ENCODE measurements at regions of chr9 and their contacts with region 1.

Region 1: GRCh38 chr9:20622330-20623020 is at the start of gene MLLT3:
- DNase-seq: peak; percentile 92 to 99 (median 97)
- ATAC-seq: peak; percentile 76 to 83 (median 78)
- H3K4me3 ChIP-seq: peak within 1 kb of the TSS; percentile 91 to 95
- H3K4me3 Mint-ChIP-seq: peak within 1 kb of the TSS; percentile 96 to 99 (median 98)
- H3K27ac ChIP-seq: peak within 1 kb of the TSS; percentile 82
- H3K27ac Mint-ChIP-seq: peak within 1 kb of the TSS; percentile 97 to 99
- H3K4me1 ChIP-seq: peaks cover 19 to 34% of the 10 kb centered on the region in 2 experiments
- H3K4me1 Mint-ChIP-seq: peaks cover 43 to 48% (median 45%) of the 10 kb centered on the region in 3 donors
- H3K27me3 ChIP-seq: no peaks in the 10 kb centered on the region
- H3K27me3 Mint-ChIP-seq: no peaks in the 10 kb centered on the region
- total RNA-seq, gene MLLT3: 51.8 to 96.6 (median 58.9) TPM

Region 2: DNA sequence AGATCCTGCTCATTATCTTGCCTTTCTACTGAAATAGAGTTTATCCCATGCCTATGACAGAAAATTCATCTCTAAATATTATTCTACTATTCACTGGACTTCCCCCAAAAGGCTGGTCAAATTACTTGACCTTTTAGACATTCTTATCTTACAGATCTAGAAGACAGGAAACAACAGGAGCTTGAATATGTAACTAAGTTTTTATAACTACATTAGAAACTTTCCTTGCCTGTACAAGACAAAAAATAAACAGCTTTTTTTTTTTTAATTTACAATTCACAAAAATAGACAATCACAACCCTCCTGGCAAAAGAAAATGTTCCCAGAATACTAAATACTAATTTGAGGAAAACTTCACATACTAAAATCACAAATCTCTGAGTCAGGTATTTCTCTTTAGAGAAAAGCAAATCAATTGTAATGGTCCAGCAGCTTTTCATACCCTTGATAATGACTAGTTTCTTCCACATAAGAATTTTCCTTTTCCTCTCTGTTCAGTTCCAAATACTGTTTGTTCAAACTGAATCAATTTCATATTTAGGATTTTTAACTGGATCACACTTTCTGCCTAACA is 68.8 kb before region 1 on chr9:
- CTCF ChIA-PET with region 1: interaction called in 1 of 2 experiments, 6 read pairs
- POLR2A ChIA-PET with region 1: interaction called in 1 of 2 experiments, 14 read pairs
- DNase-seq: no peak
- ATAC-seq: no peak
- H3K4me3 ChIP-seq: no peak overlapping the region
- H3K4me3 Mint-ChIP-seq: peak overlapping the region; percentile 32 to 40 (median 37)
- H3K27ac ChIP-seq: no peak overlapping the region
- H3K27ac Mint-ChIP-seq: peak overlapping the region; percentile 67 to 69
- H3K4me1 ChIP-seq: peaks cover 17 to 52% of the 10 kb centered on the region in 2 experiments
- H3K4me1 Mint-ChIP-seq: peaks cover 84 to 87% (median 85%) of the 10 kb centered on the region in 3 donors
- H3K27me3 ChIP-seq: no peaks in the 10 kb centered on the region
- H3K27me3 Mint-ChIP-seq: no peaks in the 10 kb centered on the region

Region 3: DNA sequence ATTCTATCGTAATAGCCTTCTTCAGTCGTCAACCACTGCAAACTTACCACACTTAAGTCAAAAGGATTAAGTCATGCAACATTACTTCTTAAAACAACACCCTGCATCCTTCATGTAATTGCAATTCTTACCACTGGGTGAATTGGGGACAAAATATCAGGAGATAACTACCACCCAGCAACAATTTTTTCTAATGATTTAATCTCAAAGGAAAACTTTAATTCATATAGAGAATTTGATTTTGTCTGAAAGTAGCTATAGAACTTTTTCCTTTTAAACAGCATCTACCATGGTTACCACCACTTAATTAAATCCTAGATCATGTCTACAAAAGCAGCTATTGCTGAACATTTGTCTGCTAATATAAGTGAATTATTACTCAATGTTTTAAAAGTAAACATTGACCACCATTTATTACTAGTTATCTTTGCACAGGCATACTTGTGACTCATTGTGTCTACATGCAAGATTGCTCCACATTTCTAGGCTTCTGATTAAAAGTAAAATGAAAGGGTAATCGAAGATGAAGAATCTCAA is 10.7 kb before region 1 on chr9:
- CTCF ChIA-PET with region 1: interaction called in 1 of 2 experiments, 14 read pairs
- POLR2A ChIA-PET with region 1: interaction called, 4 to 10 read pairs
- DNase-seq: peak in 1 of 35 experiments; percentile 41
- ATAC-seq: peak; percentile 37 to 71 (median 53)
- H3K4me3 ChIP-seq: no peak overlapping the region
- H3K4me3 Mint-ChIP-seq: peak overlapping the region in 1 of 3 donors; percentile 11
- H3K27ac ChIP-seq: no peak overlapping the region
- H3K27ac Mint-ChIP-seq: peak overlapping the region in 1 of 2 donors; percentile 17
- H3K4me1 ChIP-seq: peaks cover 2 to 13% of the 10 kb centered on the region in 2 experiments
- H3K4me1 Mint-ChIP-seq: peaks cover 77 to 94% (median 78%) of the 10 kb centered on the region in 3 donors
- H3K27me3 ChIP-seq: no peaks in the 10 kb centered on the region
- H3K27me3 Mint-ChIP-seq: no peaks in the 10 kb centered on the region

Region 4: GRCh38 chr9:20684035-20684872 is 61.8 kb after region 1 on chr9 and contains the start of gene FOCAD:
- CTCF ChIA-PET with region 1: interaction called, 4 to 19 read pairs
- POLR2A ChIA-PET with region 1: interaction called, 5 to 20 read pairs
- DNase-seq: peak; percentile 90 to 97 (median 93)
- ATAC-seq: peak; percentile 97 to 99 (median 98)
- H3K4me3 ChIP-seq: peak within 1 kb of the TSS; percentile 85 to 96
- H3K4me3 Mint-ChIP-seq: peak within 1 kb of the TSS; percentile 86 to 90 (median 87)
- H3K27ac ChIP-seq: peak within 1 kb of the TSS; percentile 66
- H3K27ac Mint-ChIP-seq: peak within 1 kb of the TSS; percentile 70 to 84
- H3K4me1 ChIP-seq: peaks cover 13 to 15% of the 10 kb centered on the region in 2 experiments
- H3K4me1 Mint-ChIP-seq: peaks cover 15 to 22% (median 22%) of the 10 kb centered on the region in 3 donors
- H3K27me3 ChIP-seq: no peaks in the 10 kb centered on the region
- H3K27me3 Mint-ChIP-seq: no peaks in the 10 kb centered on the region
- total RNA-seq, gene FOCAD: 13.4 to 29.0 (median 21.3) TPM

Measured in T-cell (primary cell).